Esophagus muscularis mucosa (tissue), 4 donors: ENCODE measurements at regions of chr9 and their contacts with region 1.

Region 1: DNA sequence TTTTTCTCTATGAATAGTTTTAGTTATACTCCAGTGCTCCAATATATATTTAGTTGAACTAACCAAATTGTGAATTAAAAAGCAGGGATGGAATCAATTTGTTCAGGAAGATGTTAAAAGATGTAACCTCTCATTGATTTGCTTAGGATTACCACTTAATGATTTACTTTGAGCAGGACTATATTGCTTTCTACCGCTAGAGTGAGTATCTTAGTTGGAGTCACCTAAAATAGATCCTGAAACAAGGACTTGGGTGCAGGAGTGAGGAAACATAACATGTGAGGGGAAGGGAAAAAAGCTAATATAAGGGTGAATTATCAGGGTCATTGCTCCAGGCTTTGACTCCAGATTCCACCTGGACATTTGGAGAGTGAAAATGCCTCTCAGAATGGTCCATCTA is 2277.4 kb upstream of the C9orf72 start:
- DNase-seq: no peak
- H3K4me3 ChIP-seq: no peak overlapping the region
- H3K27ac ChIP-seq: no peak overlapping the region
- H3K4me1 ChIP-seq: no peaks in the 10 kb centered on the region
- H3K27me3 ChIP-seq: no peaks in the 10 kb centered on the region
- CTCF ChIP-seq: no peak
- EP300 ChIP-seq: no peak
- POLR2A ChIP-seq: no peak

Region 2: DNA sequence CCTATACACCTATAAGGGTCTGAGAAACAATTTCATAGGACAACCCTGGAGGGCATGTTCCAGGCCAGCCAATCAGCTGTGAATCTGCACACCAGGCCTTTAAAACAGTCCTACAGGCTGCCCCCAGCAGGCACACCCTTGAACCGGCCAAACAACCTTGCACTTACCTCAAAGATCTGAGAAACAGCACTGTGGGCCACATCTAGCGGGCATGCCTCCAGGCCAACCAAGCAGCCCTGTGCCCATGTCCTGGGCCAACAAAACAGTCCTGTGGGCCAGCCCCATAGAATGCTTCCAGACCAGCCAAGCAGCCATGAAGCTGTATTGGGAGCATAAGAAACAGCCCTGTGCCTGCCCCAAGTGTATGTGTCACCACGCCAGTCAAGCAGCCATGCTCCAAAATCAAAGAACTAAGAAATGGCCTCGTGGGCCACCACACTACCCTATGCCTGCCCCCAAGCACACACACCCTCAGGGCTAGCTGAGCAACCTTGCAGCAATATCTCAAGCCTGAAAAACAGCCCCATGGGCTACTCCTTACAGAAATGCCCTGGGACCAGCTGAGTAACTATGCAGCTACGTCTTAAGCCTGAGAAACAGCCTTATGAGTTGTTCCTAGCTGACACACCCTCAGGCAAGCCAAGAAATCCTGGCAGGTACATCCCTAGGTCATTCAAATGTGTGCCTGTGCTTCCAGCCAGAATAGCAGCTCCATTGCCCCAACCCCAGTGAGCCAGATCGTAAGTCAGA is 33.5 kb before region 1 on chr9:
- intact Hi-C with region 1: no loop called
- DNase-seq: no peak
- H3K4me3 ChIP-seq: no peak overlapping the region
- H3K27ac ChIP-seq: no peak overlapping the region
- H3K4me1 ChIP-seq: no peaks in the 10 kb centered on the region
- H3K27me3 ChIP-seq: no peaks in the 10 kb centered on the region
- CTCF ChIP-seq: no peak
- EP300 ChIP-seq: no peak
- POLR2A ChIP-seq: no peak

Region 3: DNA sequence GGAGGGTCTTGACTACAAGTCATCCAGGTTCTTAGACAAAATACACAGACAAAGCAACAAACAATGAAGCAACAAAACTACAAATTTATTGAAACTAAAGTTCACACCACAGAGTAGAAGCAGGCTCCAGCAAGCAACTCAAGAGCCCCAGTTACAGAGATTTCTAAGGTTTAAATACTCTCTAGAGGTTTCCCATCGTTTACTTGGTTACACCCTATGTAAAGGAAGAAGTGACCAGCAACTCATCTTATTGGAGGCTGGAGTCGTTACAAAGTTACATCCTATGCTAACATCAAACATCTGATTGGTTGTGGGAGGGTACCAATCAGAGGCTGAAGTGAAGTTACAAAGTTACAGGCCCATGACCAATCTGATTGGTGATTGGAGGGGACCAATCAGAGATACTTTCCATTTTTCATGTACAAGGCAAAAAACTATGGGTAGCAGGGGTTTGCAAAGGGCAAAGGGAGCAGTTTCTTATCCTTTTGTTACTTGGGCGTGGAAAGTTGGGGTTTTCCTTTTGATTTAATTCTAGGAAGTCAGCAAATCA is 15.2 kb after region 1 on chr9:
- intact Hi-C with region 1: loop called (anchors 2 kb)
- DNase-seq: no peak
- H3K4me3 ChIP-seq: no peak overlapping the region
- H3K27ac ChIP-seq: no peak overlapping the region
- H3K4me1 ChIP-seq: no peaks in the 10 kb centered on the region
- H3K27me3 ChIP-seq: no peaks in the 10 kb centered on the region
- CTCF ChIP-seq: no peak
- EP300 ChIP-seq: no peak
- POLR2A ChIP-seq: no peak